GM13977 (cell line): ENCODE measurements at regions of chr5 and their contacts with region 1.

Region 1: GRCh38 chr5:170444969-170445505 is 55.9 kb upstream of the KCNMB1 start:
- DNase-seq: no peak
- CTCF ChIP-seq: no peak

Region 2: DNA sequence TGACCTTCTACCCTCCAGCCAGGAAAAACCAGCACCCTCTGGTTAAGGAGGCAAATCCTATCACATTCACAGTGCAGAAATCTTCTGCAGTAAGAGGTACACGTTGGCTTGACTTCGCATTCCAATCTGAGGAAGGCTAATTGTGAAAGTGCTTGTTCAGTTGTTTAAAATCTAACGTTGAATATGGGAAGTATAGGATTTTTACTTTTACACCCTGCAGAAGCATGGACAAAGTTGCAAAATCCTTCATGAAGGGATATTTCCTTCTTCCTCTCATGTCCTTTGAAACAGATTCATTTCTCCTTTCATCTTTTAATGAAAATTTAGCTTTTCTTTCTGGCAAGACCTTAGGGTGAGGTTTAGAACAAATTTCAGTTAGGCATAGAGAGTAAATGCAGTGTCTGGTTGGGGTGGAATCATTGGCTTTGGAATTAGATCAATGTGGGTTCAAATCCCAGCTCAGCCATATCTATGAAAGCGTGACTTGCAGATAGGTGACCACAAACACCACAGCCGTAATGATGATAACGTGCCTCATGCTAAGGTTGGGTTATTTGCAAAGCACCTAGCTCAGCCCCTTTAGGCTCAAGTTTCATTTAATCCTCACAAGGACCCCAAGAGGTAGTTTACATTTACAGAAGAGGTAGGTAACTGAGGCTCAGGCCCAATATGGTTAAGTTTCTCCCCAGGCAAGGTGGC is 254.5 kb before region 1 on chr5:
- in situ Hi-C with region 1: no loop called
- DNase-seq: no peak
- CTCF ChIP-seq: no peak

Region 3: GRCh38 chr5:170623576-170624181 is 178.6 kb after region 1 on chr5:
- in situ Hi-C with region 1: loop called (anchors 10 kb)
- DNase-seq: peak; percentile 56
- CTCF ChIP-seq: peak; percentile 66

Region 4: DNA sequence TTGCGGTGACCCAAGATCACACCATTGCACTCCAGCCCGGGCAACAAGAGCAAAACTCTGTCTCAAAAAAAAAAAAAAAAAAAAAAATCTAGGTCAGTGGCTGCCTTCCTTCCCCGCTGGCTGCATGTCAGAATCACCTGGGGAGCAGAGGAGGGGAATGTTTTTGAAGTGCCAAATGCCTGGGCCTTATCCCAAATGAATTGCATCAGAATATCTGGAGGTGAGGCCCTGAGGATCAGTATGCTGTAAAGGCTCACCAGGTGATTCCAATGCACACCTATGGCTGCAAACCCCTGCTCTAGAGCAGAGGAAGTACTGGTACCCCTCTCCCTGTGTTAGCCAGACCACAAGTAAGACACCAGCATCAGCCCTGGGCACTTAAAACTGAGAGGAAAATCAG is 293.8 kb after region 1 on chr5:
- in situ Hi-C with region 1: no loop called
- DNase-seq: no peak
- CTCF ChIP-seq: no peak

Region 5: DNA sequence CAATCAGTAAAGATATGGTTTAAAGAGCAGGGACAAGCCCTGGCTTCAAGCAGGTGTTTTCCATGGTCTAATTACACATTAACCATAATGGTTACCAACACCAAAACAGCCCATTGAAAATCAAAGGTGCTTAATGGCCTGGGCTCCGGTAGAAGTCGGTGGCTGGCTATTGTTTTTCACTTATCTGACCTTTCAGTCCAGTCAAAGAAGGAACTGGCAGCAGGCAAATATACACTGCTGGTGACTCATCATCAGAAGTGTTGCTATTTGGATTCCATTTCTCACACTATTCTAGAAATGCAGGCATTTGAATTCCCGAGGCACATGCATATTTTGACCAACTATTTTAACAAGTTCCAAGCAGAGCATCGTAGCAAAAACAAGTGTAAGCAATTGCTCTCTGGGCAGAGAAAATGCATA is 312.2 kb after region 1 on chr5:
- in situ Hi-C with region 1: no loop called
- DNase-seq: no peak
- CTCF ChIP-seq: no peak